Right cardiac atrium (tissue), 5 donors: ENCODE measurements at regions of chr1 and their contacts with region 1.

Region 1: DNA sequence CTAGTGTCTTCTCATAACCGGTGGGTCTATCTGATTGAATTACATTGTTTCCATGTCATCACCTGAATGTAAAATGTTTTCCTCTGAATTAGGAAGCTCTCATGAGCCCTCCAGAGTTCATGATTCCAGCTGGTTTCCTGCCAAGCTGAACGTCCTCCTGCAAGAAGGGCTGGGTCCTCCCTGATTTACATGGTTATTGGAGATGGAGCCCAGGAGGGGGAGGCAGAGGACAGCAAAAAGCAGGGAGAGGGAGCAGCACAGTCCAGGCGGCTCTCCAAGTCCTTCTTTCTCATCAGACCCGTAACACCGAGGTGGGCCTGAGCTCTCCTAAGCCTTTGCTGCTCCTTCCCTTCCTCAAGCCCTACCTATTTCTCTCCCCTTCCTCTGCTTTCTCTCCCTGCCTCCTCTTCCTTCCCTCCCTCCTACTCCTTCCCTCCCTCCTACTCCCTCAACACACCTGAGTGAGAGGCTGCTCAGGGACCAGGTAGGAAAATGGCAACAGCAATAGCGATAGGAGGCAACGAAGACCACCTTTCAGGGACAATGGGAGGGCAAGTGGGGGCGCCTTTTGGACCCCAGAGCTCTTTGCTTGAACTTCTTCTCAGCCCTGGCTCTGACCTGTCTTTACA is 265.9 kb downstream of the PRDM2 start:
- DNase-seq: peak; percentile 67 to 80 (median 75)
- ATAC-seq: peak; percentile 81 to 83
- H3K4me3 ChIP-seq: no peak overlapping the region
- H3K27ac ChIP-seq: no peak overlapping the region
- H3K4me1 ChIP-seq: no peaks in the 10 kb centered on the region
- H3K27me3 ChIP-seq: no peaks in the 10 kb centered on the region

Region 2: DNA sequence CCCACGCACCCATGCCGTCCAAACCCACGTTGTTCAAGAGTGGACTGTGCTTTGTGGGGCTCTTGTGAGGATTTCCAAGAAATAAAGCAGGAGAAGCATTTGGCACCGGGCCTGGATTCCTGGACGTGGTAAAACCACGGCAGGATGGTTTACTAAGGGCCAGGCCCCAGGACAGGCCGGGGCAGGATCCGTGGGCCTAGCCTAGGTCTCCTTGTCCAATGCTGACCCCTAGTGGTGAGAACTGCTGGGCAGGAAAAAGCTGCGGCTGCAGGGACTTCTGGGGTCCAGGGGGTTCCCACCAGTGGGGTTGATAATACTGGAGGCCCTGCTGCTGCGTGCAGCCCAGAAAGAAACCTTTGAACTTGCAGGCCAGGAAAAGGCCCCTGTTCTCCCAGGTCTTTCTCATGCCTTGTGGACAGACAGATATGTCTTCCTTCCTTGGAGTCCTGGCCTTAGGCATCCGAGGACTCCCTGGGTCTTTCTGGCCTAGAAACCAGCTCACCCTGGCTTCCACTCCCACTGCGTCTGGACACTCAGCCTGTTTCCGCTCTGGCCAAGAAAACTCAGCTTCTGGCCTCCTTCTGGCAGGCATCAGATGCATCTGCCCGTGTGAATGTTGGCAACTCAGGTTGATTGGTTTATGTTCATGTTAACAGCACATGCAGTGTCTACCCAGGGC is 1080.7 kb after region 1 on chr1:
- intact Hi-C with region 1: loop called in 2 of 4 experiments (anchors 5 to 10 kb)
- DNase-seq: peak; percentile 74 to 86 (median 82)
- ATAC-seq: peak; percentile 63 to 77
- H3K4me3 ChIP-seq: no peak overlapping the region
- H3K27ac ChIP-seq: no peak overlapping the region
- H3K4me1 ChIP-seq: no peaks in the 10 kb centered on the region
- H3K27me3 ChIP-seq: no peaks in the 10 kb centered on the region